ENCODE measurements at regions of chr11 and their contacts with region 1.

Region 1: DNA sequence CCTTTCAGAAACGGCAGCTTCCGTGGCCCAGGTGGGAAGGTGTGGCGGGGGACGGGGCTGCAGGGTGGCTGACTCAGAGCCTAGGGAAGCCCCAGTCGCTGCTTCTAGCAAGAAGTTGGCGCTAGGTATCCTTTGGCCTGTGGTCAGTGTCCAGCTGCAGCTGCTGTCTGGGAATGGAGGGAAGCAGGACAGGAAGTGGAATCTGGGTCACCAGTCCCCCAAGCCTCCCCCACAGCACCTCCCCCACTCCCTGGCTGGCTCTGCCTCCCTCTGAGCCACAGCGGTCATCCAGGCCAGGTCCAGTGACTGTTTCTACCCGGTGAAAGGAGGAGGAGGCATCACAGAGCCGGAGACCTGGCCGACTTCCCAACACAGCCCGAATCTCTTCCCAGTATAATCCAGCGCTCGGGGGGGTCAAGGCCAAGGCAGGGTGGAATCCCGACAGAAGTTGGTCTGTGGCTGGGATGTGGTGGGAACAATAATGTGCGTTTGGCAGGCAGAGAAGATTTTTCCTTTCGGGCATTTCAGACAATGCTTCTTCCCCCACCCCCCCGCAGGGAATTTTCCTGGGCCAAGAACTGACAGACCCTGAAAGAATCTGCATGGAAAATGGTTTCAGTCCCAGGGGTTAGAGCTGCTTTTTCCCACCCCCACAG is 45.1 kb downstream of the C11orf96 start:
- DNase-seq: peak in 1 of 2 donors; percentile 97
- H3K4me3 ChIP-seq: peak overlapping the region in 1 of 2 donors; percentile 17
- H3K27ac ChIP-seq: peak overlapping the region; percentile 77
- H3K4me1 ChIP-seq: peaks cover 32% of the 10 kb centered on the region
- H3K27me3 ChIP-seq: no peaks in the 10 kb centered on the region
- CTCF ChIP-seq: no peak
- POLR2A ChIP-seq: no peak

Region 2: GRCh38 chr11:44029977-44030911 is 42.7 kb after region 1 on chr11:
- intact Hi-C with region 1: loop called (anchors 2 kb)
- DNase-seq: peak; percentile 70 to 90
- H3K4me3 ChIP-seq: no peak overlapping the region
- H3K27ac ChIP-seq: peak overlapping the region; percentile 78
- H3K4me1 ChIP-seq: peaks cover 27% of the 10 kb centered on the region
- H3K27me3 ChIP-seq: no peaks in the 10 kb centered on the region
- CTCF ChIP-seq: no peak
- POLR2A ChIP-seq: no peak